ENCODE measurements at regions of chr6 and their contacts with region 1.

Region 1: GRCh38 chr6:75230484-75231325 is 12.9 kb downstream of the COX7A2 start:
- DNase-seq: peak in 1 of 2 experiments; percentile 34
- H3K4me3 ChIP-seq: no peak overlapping the region
- H3K27ac ChIP-seq: no peak overlapping the region
- H3K4me1 ChIP-seq: no peaks in the 10 kb centered on the region
- H3K27me3 ChIP-seq: no peaks in the 10 kb centered on the region
- CTCF ChIP-seq: peak; percentile 77

Region 2: DNA sequence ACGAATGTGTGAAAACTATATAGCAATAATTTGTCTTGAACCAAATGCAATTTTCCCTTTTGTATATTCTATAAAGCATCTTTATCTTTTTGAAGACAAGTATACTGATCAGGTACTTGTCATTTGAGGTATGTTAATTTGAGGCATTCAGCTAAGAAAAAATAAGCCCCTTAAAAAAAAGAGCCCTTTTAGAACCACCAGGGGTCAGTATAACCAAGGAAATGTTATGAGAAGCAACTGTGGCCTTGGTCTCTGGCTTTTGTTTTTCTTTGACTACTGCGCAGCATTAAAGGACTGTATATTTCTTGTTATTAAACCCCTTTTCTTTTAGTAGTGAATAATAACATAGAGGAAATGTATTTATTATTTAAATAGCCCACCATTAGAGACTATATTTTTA is 1491.6 kb before region 1 on chr6:
- CTCF ChIA-PET with region 1: no interaction called
- POLR2A ChIA-PET with region 1: no interaction called
- intact Hi-C with region 1: loop called (anchors 1 kb)
- DNase-seq: peak in 1 of 2 experiments; percentile 40
- H3K4me3 ChIP-seq: no peak overlapping the region
- H3K27ac ChIP-seq: no peak overlapping the region
- H3K4me1 ChIP-seq: no peaks in the 10 kb centered on the region
- H3K27me3 ChIP-seq: no peaks in the 10 kb centered on the region
- CTCF ChIP-seq: peak; percentile 92